Mammary epithelial cell (primary cell): ENCODE measurements at regions of chr6 and their contacts with region 1.

Region 1: GRCh38 chr6:138987640-138988468 is at the start of gene REPS1:
- DNase-seq: peak; percentile 84
- H3K4me3 ChIP-seq: peak within 1 kb of the TSS; percentile 94 to 99 (median 95)
- H3K27ac ChIP-seq: peak within 1 kb of the TSS; percentile 85
- H3K4me1 ChIP-seq: peaks cover 25% of the 10 kb centered on the region
- H3K27me3 ChIP-seq: no peaks in the 10 kb centered on the region
- CTCF ChIP-seq: peak; percentile 49 to 90
- total RNA-seq, gene REPS1: 39.5 to 55.8 TPM

Region 2: DNA sequence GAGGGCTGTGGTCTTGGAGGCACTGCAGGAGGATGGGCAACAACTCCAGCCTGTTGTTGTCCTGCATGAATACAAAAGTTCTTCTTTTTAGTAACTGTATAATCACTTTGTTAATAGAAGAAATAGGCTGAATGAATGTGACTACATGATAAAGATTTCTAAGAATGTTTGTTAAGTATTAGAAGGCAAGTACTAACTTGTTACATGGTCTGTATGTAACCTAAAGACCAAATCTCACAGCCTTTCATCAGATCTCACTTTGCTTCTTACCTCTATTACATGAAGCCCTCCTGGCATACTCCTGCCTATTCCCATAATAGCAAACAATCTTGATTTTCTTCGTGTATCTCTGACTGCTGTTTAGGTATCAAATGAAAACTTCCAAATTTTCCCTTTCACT is 73.2 kb before region 1 on chr6:
- CTCF ChIA-PET with region 1: no interaction called
- dilution Hi-C with region 1: no loop called
- in situ Hi-C with region 1: no loop called
- intact Hi-C with region 1: loop called (anchors 1 kb)
- DNase-seq: peak; percentile 50
- H3K4me3 ChIP-seq: no peak overlapping the region
- H3K27ac ChIP-seq: peak overlapping the region; percentile 39
- H3K4me1 ChIP-seq: peaks cover 17% of the 10 kb centered on the region
- H3K27me3 ChIP-seq: no peaks in the 10 kb centered on the region
- CTCF ChIP-seq: no peak

Region 3: GRCh38 chr6:138944412-138944811 is 43.4 kb before region 1 on chr6:
- CTCF ChIA-PET with region 1: no interaction called
- dilution Hi-C with region 1: no loop called
- in situ Hi-C with region 1: no loop called
- intact Hi-C with region 1: loop called (anchors 2 kb)
- DNase-seq: peak; percentile 87
- H3K4me3 ChIP-seq: no peak overlapping the region
- H3K27ac ChIP-seq: peak overlapping the region; percentile 73
- H3K4me1 ChIP-seq: peaks cover 7% of the 10 kb centered on the region
- H3K27me3 ChIP-seq: no peaks in the 10 kb centered on the region
- CTCF ChIP-seq: no peak

Region 4: GRCh38 chr6:139028658-139029469 is 41.0 kb after region 1 on chr6 and contains the start of gene ABRACL:
- CTCF ChIA-PET with region 1: no interaction called
- dilution Hi-C with region 1: no loop called
- in situ Hi-C with region 1: no loop called
- intact Hi-C with region 1: loop called (anchors 2 kb)
- DNase-seq: peak; percentile 77
- H3K4me3 ChIP-seq: peak within 1 kb of the TSS; percentile 81 to 98 (median 81)
- H3K27ac ChIP-seq: peak within 1 kb of the TSS; percentile 83
- H3K4me1 ChIP-seq: peaks cover 12% of the 10 kb centered on the region
- H3K27me3 ChIP-seq: no peaks in the 10 kb centered on the region
- CTCF ChIP-seq: no peak
- total RNA-seq, gene ABRACL: 42.5 to 50.4 TPM

Region 5: GRCh38 chr6:139134817-139135581 is 147.1 kb after region 1 on chr6 and contains the start of gene HECA:
- CTCF ChIA-PET with region 1: no interaction called
- dilution Hi-C with region 1: no loop called
- in situ Hi-C with region 1: no loop called
- intact Hi-C with region 1: loop called (anchors 5 kb)
- DNase-seq: peak; percentile 89
- H3K4me3 ChIP-seq: peak within 1 kb of the TSS; percentile 79 to 93 (median 89)
- H3K27ac ChIP-seq: peak within 1 kb of the TSS; percentile 78
- H3K4me1 ChIP-seq: no peaks in the 10 kb centered on the region
- H3K27me3 ChIP-seq: no peaks in the 10 kb centered on the region
- CTCF ChIP-seq: no peak
- total RNA-seq, gene HECA: 15.0 to 23.8 TPM